ENCODE measurements at regions of chr16 and their contacts with region 1.

Region 1: DNA sequence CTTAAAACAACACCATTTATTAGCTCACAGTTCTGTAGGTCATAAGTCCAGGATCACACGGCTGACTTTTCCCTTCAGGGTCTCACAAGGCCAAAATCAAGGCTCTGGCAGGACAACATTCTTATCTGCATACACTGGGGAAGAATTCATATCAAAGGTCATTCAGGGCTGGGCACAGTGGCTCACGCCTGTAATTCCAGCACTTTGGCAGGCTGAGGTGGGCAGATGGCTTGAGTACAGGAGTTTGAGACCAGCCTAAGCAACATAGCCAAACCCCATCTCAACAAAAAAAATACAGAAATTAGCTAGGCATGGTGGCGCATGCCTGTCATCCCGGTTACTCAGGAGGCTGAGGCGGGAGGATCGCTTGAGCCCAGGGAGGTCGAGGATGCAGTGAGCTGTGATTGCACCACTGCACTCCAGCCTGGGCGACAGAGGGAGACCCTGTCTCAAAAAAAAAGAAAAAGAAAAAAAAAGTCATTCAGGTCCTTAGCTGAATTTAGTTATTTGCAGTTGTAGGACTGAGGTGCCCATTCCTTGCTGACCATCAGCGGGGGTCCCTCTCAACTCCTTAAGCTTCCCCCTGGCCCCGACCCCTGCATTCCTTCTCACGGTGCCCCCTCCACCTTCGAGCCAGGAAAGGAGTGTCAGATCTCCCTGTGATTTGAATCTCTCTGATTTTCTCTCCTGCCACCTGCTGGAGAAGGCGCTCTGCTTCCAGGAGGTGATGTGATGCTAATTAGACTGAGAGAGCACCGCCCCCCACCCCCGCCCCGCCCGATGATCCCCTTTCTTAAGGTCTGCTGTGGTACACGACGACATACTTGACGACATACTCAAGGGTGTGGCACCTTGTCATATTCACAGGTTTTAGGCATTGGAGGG is 91.8 kb upstream of the CLEC18A start:
- DNase-seq: peak; percentile 66 to 70
- H3K4me3 ChIP-seq: no peak overlapping the region
- H3K4me3 Mint-ChIP-seq: peak overlapping the region; percentile 65
- H3K27ac Mint-ChIP-seq: peak overlapping the region; percentile 86
- H3K4me1 ChIP-seq: peaks cover 12% of the 10 kb centered on the region
- H3K4me1 Mint-ChIP-seq: peaks cover 18% of the 10 kb centered on the region
- H3K27me3 ChIP-seq: no peaks in the 10 kb centered on the region
- H3K27me3 Mint-ChIP-seq: no peaks in the 10 kb centered on the region
- CTCF ChIP-seq: peak; percentile 52 to 59

Region 2: GRCh38 chr16:69709456-69710084 is 149.8 kb before region 1 on chr16:
- CTCF ChIA-PET with region 1: interaction called, 5 read pairs
- POLR2A ChIA-PET with region 1: no interaction called
- intact Hi-C with region 1: loop called (anchors 1 kb)
- DNase-seq: peak in 1 of 2 experiments; percentile 62
- H3K4me3 ChIP-seq: no peak overlapping the region
- H3K4me3 Mint-ChIP-seq: no peak overlapping the region
- H3K27ac Mint-ChIP-seq: no peak overlapping the region
- H3K4me1 ChIP-seq: peaks cover 7% of the 10 kb centered on the region
- H3K4me1 Mint-ChIP-seq: peaks cover 13% of the 10 kb centered on the region
- H3K27me3 ChIP-seq: no peaks in the 10 kb centered on the region
- H3K27me3 Mint-ChIP-seq: no peaks in the 10 kb centered on the region
- CTCF ChIP-seq: peak; percentile 67 to 82

Region 3: DNA sequence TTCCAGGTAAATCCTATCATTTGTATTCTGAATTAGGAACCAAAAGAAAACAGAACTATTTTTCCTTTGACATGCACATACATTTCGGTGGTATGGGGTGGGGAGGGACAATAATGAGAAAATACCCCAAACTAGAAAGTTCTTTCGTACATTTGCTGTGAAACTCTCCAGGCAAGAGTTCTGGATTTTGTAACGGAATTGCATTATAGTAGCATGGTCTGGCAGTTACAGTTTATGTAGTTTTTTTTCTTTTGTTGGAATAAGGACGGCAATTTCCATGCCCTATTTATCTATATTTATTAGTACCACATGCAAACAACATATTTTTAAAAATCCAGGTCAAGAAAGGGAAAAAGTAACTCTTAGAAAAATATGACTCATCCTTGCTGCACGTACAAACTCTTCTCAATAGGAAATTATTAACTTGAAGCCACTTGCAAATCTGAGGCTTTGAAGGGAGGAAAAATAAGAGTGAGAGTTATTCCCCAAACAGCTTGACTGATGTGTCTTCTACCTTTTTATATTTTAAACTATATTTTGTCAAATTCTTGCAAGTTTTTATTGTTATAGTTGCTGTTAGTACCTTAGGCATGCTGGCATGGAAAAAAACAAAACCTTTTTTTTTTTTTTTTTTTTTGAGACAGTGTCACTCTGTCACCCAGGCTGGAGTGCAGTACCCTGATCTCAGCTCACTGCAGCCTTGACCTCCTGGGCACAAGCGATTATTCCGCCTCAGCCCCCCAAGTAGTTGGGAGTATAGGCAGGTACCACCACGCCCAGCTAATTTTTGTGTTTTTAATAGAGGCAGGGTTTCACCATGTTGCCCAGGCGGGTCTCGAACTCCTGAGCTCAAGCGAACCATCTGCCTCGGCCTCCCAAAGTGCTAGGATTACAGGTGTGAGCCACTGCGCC is 27.9 kb before region 1 on chr16:
- CTCF ChIA-PET with region 1: no interaction called
- POLR2A ChIA-PET with region 1: no interaction called
- intact Hi-C with region 1: loop called (anchors 2 kb)
- DNase-seq: no peak
- H3K4me3 ChIP-seq: no peak overlapping the region
- H3K4me3 Mint-ChIP-seq: peak overlapping the region; percentile 31
- H3K27ac Mint-ChIP-seq: peak overlapping the region; percentile 87
- H3K4me1 ChIP-seq: peaks cover 35% of the 10 kb centered on the region
- H3K4me1 Mint-ChIP-seq: peaks cover 31% of the 10 kb centered on the region
- H3K27me3 ChIP-seq: no peaks in the 10 kb centered on the region
- H3K27me3 Mint-ChIP-seq: no peaks in the 10 kb centered on the region
- CTCF ChIP-seq: no peak

Region 4: DNA sequence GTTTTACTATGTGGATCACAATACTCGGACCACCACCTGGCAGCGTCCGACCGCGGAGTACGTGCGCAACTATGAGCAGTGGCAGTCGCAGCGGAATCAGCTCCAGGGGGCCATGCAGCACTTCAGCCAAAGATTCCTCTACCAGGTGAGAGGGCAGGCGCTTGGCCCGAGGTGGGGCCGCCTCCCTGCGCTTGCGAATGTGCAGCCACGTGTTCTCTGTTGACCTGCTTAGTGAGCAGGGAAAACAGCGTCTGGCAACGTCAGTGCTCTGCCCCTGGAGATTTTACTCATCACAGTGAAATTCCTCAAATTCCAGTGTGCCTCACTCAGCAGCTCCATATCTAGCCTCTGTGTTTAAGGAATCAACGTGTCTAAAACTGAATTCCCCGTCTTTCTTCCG is 58.4 kb after region 1 on chr16:
- CTCF ChIA-PET with region 1: no interaction called
- POLR2A ChIA-PET with region 1: no interaction called
- intact Hi-C with region 1: loop called (anchors 5 kb)
- DNase-seq: peak; percentile 90 to 92
- H3K4me3 ChIP-seq: peak overlapping the region; percentile 18
- H3K4me3 Mint-ChIP-seq: peak overlapping the region; percentile 74
- H3K27ac Mint-ChIP-seq: peak overlapping the region; percentile 95
- H3K4me1 ChIP-seq: peaks cover 14% of the 10 kb centered on the region
- H3K4me1 Mint-ChIP-seq: peaks cover 24% of the 10 kb centered on the region
- H3K27me3 ChIP-seq: no peaks in the 10 kb centered on the region
- H3K27me3 Mint-ChIP-seq: no peaks in the 10 kb centered on the region
- CTCF ChIP-seq: peak in 1 of 2 experiments; percentile 11

Measured in Caco-2 (cell line).